Vagina (tissue), 2 donors: ENCODE measurements at regions of chr1 and their contacts with region 1.

Region 1: DNA sequence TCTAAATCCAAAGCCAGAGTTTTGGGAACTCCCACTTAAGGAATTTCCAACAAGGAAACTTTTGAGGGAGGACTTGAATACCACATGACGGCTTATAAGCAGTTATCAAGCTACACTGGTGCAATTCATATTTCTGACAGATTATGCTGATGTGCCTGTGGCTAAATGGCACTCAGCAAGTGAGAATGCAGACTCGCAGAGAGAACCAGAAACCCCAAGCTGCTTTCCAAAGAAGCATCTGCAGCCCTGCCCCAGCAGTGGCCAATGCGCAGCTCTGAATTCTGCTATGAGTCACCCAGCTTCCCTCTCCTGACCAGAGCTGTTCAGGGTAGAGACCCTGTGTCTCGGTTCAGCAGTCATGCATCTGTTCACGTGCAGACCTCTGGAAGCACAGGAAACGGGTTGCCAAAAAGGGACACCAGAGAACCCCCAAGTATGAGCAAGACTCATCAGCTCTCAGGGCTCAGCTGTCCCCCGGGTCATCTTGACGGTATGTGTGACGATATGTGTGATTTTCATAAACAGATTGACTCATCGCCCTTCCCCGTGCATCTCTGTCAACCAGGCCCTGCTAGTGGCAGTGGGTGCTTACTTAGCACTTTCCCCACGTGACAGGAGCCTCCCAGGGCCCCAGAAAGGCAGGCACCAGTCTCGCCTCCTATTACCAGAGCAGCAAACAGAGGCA is 76.3 kb downstream of the ITPKB start:
- DNase-seq: peak in 1 of 2 donors; percentile 99
- H3K4me3 ChIP-seq: no peak overlapping the region
- H3K27ac ChIP-seq: peak overlapping the region; percentile 98
- H3K4me1 ChIP-seq: peaks cover 98% of the 10 kb centered on the region
- H3K27me3 ChIP-seq: no peaks in the 10 kb centered on the region
- CTCF ChIP-seq: no peak
- POLR2A ChIP-seq: peak in 1 of 2 donors; percentile 44

Region 2: GRCh38 chr1:226457307-226457712 is 205.5 kb before region 1 on chr1:
- intact Hi-C with region 1: no loop called
- DNase-seq: no peak
- H3K4me3 ChIP-seq: no peak overlapping the region
- H3K27ac ChIP-seq: no peak overlapping the region
- H3K4me1 ChIP-seq: no peaks in the 10 kb centered on the region
- H3K27me3 ChIP-seq: no peaks in the 10 kb centered on the region
- CTCF ChIP-seq: no peak
- POLR2A ChIP-seq: no peak

Region 3: DNA sequence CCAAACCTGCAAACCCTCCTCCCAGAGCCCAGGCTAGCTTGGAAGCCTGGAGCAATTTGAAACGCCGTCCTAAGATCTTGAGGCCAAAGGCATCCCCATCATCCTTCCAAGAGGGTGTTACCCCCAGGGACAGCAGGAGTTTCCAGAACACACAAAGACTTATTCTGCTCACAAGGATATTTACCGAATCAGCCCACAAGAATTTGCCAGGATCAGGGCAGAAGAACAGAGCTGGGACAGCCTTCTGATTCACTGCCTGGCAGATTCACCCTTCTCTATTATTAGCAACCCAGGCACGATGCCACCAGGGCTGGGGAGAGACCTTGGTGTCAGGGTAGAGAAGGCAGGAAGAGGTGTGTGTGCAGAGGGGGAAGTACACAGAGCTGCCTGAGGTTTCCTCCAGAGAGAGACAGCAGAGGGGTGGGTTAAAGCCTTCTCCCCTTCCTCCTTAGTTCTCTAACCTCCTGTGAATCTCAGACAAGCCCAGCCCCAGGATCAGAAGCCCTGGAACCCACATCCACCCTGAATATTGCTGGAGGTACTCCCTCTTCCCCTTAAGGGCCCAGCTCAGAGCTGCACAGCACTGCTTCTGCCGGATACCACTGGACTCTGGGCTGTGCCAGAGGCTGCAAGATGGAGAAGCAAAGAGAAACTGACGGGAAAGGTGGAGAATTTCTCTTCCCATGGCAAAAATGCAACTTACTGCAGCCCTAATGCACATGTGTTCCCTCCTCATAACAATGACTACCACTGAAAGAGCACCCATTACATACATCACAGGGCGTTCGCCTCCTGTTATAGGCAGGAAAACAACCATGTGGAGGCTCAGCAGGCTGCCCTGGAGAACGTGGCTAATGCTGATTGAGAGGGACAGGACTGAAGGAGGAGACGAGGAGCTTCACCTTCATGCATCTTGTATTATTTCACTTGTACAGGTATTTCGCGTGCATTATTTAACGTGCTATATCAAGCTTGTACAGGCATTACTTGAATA is 14.5 kb after region 1 on chr1:
- intact Hi-C with region 1: loop called (anchors 2 kb)
- DNase-seq: no peak
- H3K4me3 ChIP-seq: no peak overlapping the region
- H3K27ac ChIP-seq: peak overlapping the region; percentile 96
- H3K4me1 ChIP-seq: peaks cover 93% of the 10 kb centered on the region
- H3K27me3 ChIP-seq: no peaks in the 10 kb centered on the region
- CTCF ChIP-seq: no peak
- POLR2A ChIP-seq: no peak

Region 4: DNA sequence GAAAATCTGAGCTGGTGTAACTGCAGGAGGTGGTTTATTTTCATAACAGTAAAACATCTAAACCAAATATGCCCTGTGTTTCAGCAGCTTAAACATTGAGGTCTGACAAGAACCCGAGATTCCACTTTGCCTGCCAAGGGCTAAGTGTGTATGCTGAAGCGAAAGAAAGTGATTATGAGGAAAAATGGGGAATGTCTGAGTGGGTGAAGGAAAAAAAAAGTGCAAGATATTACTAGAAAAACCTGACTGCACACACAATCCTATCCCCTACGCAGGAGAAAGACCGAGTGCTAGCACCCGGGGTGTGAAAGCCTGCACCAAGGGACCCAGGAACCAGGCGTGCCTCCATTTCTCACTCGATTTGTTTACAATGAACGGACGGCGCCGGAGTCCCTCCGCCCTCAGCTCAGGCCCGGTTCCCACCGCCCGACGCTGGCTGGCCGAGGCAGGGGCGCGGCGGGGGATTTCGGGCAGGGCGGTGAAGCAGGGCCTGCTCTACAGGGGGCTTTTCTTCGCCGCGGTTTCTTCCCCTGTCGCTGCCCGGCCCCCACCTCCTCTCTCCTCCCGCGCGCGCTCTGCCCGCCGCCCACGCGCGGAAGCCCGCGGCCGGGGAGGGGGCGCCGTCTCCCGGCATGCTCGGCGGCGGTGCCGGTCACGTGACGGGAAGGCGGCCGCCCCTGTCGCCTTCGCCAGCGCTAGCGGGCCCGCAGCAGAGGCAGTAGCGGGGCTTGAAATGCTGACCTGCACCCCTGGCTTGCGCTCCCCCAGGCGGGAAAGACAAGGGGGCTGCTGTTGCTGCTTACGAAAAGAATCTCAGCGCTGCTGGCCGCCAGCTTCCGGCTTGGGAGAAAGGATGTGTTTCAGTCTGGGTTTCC is 40.4 kb after region 1 on chr1:
- intact Hi-C with region 1: loop called (anchors 5 kb)
- DNase-seq: no peak
- H3K4me3 ChIP-seq: peak overlapping the region; percentile 55 to 79
- H3K27ac ChIP-seq: peak overlapping the region; percentile 95
- H3K4me1 ChIP-seq: peaks cover 57% of the 10 kb centered on the region
- H3K27me3 ChIP-seq: no peaks in the 10 kb centered on the region
- CTCF ChIP-seq: peak in 1 of 3 experiments; percentile 14
- POLR2A ChIP-seq: peak in 1 of 2 donors; percentile 63

Region 5: DNA sequence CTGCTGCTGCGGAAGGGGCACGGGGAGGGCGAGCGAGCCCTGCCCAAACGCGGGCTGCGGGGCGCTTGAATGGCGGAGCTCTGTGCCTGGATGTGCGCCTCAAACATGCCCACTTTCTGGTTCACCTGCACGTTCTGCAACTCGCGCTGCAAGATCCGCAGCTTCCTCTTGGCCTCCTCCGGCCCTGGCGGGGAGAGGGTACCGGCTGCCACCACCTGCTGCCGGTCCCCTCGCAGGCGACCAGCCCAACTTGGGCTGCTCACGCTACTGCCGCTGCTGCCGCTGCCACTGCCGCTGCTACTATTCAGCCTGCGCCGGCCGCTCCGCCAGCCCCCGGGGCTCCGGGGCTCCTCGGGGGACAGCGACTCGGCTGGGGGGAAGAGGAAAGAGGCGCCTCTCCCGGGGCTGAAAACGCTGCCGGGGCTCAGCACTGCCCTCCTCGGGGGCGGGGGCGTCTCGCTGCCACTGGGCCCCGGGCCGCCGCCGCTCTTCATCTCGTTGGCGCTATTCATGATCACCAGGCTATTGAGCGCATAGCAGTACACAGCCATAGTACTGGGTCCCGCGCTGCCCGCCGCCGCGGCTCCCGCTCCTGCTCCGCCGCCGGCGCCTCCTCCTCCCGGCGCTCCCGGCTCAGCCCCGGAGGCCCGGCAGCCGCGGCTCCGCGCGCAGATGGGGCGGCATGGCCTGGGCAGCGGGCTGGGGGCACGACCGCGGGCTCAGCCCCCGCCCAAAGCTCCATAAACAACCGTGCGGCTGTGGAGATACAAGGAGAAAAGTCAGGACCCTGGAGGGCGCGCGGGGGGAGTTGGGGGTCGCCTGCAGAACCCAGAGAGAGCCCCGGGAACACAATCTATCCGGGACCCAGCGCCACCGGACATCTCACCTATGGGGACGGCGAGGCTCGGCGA is 74.4 kb after region 1 on chr1:
- intact Hi-C with region 1: loop called (anchors 5 kb)
- DNase-seq: no peak
- H3K4me3 ChIP-seq: peak overlapping the region; percentile 87 to 99
- H3K27ac ChIP-seq: peak overlapping the region; percentile 97
- H3K4me1 ChIP-seq: peaks cover 59% of the 10 kb centered on the region
- H3K27me3 ChIP-seq: no peaks in the 10 kb centered on the region
- CTCF ChIP-seq: no peak
- POLR2A ChIP-seq: peak in 1 of 2 donors; percentile 31